ENCODE measurements at regions of chrX and their contacts with region 1.

Region 1: DNA sequence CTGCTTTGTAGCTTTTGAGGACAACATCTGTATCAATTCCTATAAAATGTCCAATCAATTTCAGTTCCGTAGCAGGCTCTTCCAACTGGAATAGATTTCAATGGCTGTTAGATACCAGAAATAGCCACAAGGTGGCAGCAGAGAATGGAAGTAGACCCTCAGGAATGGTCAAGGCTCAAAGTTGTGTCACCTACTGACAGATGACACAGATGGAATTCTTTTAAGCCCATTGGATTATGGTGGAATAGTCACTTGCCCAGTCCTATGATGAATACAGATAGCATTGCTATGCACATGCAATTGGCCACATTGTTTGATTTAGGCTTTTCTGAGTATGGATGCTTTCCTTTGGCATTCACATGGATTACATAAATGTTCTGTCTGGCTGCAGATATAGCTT is 130.4 kb upstream of the RADX start:
- DNase-seq: peak; percentile 40
- H3K4me3 Mint-ChIP-seq: no peak overlapping the region
- H3K27ac Mint-ChIP-seq: no peak overlapping the region
- H3K4me1 Mint-ChIP-seq: peaks cover 21% of the 10 kb centered on the region
- H3K27me3 Mint-ChIP-seq: peaks cover 4% of the 10 kb centered on the region

Region 2: DNA sequence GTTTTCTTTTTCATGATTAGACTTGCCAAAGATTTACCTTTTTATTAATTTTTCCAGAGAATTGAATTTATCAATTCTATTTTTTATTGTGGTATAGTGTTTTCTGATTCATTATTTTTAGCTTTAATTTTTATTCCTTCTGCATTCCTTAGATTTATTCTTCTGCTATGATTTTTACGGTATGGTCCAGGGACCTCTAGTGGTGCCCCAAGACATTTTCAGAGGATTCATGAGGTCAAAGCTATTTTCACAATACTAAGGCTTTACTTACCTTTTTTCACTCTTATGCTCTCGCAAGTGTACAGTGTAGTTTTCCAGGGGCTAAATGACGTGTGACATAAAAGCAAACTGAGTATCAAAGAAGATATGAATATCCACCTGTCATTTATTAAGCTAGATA is 138.5 kb after region 1 on chrX:
- CTCF ChIA-PET with region 1: interaction called, 17 read pairs
- DNase-seq: no peak
- H3K4me3 Mint-ChIP-seq: no peak overlapping the region
- H3K27ac Mint-ChIP-seq: no peak overlapping the region
- H3K4me1 Mint-ChIP-seq: peaks cover 4% of the 10 kb centered on the region
- H3K27me3 Mint-ChIP-seq: no peaks in the 10 kb centered on the region

Measured in activated naive CD4-positive, alpha-beta T cell treated with anti-CD3 and anti-CD28 coated beads, Interleukin-2, amount 10 ng/mL, durations not matched to agents 7 days and 5 days (primary cell).